Activated naive CD4-positive, alpha-beta T cell treated with anti-CD3 and anti-CD28 coated beads for 36 hours (primary cell): ENCODE measurements at regions of chr5 and their contacts with region 1.

Region 1: DNA sequence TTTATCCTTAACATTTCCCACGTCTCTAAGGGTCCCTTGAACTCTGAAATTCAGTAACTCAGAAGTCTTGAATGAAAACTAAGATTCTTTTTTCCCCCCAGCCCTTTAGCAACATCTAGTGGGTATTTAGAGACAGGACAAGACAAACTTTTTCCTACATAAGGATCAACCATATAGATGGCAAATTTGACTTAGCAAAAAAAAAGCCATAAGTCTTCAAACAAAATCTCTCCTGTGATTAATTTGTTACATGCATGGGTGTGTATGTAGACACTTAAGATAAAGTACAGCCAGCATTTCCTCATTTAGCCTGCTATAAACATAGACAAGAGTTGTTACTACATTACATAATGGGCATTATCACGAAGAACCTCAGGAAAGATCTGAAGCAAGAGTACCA is 29.1 kb upstream of the ANKRD31 start:
- DNase-seq: no peak
- H3K4me3 Mint-ChIP-seq: no peak overlapping the region
- H3K27ac Mint-ChIP-seq: no peak overlapping the region
- H3K4me1 Mint-ChIP-seq: no peaks in the 10 kb centered on the region
- H3K27me3 Mint-ChIP-seq: no peaks in the 10 kb centered on the region

Region 2: GRCh38 chr5:73902327-73903051 is 1363.2 kb before region 1 on chr5:
- CTCF ChIA-PET with region 1: no interaction called
- intact Hi-C with region 1: loop called (anchors 5 kb)
- DNase-seq: peak; percentile 9
- H3K4me3 Mint-ChIP-seq: no peak overlapping the region
- H3K27ac Mint-ChIP-seq: no peak overlapping the region
- H3K4me1 Mint-ChIP-seq: peaks cover 3% of the 10 kb centered on the region
- H3K27me3 Mint-ChIP-seq: peaks cover 23% of the 10 kb centered on the region

Region 3: GRCh38 chr5:74684900-74685851 is 580.6 kb before region 1 on chr5 and contains the start of gene HEXB:
- CTCF ChIA-PET with region 1: no interaction called
- intact Hi-C with region 1: loop called (anchors 10 kb)
- DNase-seq: peak; percentile 92
- H3K4me3 Mint-ChIP-seq: peak within 1 kb of the TSS; percentile 71
- H3K27ac Mint-ChIP-seq: peak within 1 kb of the TSS; percentile 6
- H3K4me1 Mint-ChIP-seq: peaks cover 23% of the 10 kb centered on the region
- H3K27me3 Mint-ChIP-seq: no peaks in the 10 kb centered on the region
- total RNA-seq, gene HEXB: 65.6 to 70.0 TPM